GM12878 (cell line): ENCODE measurements at regions of chr14 and their contacts with region 1.

Region 1: DNA sequence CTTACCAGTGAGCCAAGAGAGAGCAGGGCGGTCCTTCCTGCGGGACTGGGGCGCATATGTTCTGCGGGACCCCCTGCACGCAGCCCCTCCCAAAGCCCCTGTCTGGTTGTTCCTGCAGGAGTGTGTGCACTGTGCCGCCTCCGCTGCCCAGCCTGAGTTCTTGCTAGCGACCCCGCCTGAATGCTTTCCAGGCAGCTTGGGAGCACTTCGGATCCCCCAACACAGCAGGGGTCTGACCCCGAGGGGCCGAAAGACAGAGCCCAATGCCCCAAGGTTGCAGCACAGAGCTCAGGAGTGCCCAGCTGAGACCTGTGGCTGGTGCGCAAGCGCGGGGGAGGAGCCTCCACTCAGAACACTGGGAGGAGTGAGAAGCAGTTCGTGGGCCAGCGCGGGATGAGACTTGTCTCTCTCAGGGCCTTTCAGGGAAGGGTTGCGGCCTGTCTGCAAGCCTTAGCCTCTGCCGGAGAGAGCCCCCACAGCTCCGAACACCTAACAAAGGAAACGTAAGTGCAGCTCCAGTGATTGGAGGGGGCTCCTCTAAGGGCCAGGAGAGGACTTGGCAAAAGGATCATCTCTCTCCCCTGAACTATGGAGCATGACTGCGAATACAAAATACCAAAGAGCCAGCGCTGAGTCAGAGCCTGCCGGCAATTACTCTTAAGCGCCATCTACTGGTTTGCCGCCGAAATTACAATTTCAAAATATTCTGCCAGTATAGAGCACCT is 50.5 kb downstream of the GTF2A1 start:
- DNase-seq: peak; percentile 61
- ATAC-seq: peak; percentile 99
- H3K4me3 ChIP-seq: peak overlapping the region; percentile 80
- H3K27ac ChIP-seq: peak overlapping the region; percentile 84
- H3K4me1 ChIP-seq: peaks cover 32% of the 10 kb centered on the region
- H3K27me3 ChIP-seq: no peaks in the 10 kb centered on the region
- CTCF ChIP-seq: peak; percentile 82 to 86 (median 83)
- EP300 ChIP-seq: no peak
- POLR2A ChIP-seq: peak; percentile 87
- RAD21 ChIP-seq: peak; percentile 75

Region 2: GRCh38 chr14:80954687-80955299 is 215.5 kb before region 1 on chr14:
- CTCF ChIA-PET with region 1: interaction called, 10 read pairs
- POLR2A ChIA-PET with region 1: no interaction called
- RAD21 ChIA-PET with region 1: interaction called, 5 read pairs
- SMC1A ChIA-PET with region 1: interaction called, 4 read pairs
- in situ Hi-C with region 1: no loop called
- intact Hi-C with region 1: loop called (anchors 1 kb)
- DNase-seq: no peak
- ATAC-seq: peak; percentile 46
- H3K4me3 ChIP-seq: no peak overlapping the region; the same call in 1 of the 2 replicates
- H3K27ac ChIP-seq: no peak overlapping the region
- H3K4me1 ChIP-seq: peaks cover 12% of the 10 kb centered on the region
- H3K27me3 ChIP-seq: peaks cover 0 to 5% of the 10 kb centered on the region in 2 experiments; a peak in 3 of 4 replicates
- CTCF ChIP-seq: peak; percentile 70 to 83 (median 71)
- EP300 ChIP-seq: no peak
- POLR2A ChIP-seq: no peak
- RAD21 ChIP-seq: peak; percentile 84

Region 3: GRCh38 chr14:80996049-80996901 is 174.0 kb before region 1 on chr14:
- CTCF ChIA-PET with region 1: interaction called, 96 read pairs
- POLR2A ChIA-PET with region 1: no interaction called
- RAD21 ChIA-PET with region 1: interaction called, 25 read pairs
- SMC1A ChIA-PET with region 1: interaction called, 27 read pairs
- in situ Hi-C with region 1: loop called (anchors 5 kb)
- intact Hi-C with region 1: loop called (anchors 1 kb)
- DNase-seq: no peak
- ATAC-seq: peak; percentile 92
- H3K4me3 ChIP-seq: no peak overlapping the region
- H3K27ac ChIP-seq: no peak overlapping the region
- H3K4me1 ChIP-seq: no peaks in the 10 kb centered on the region
- H3K27me3 ChIP-seq: no peaks in the 10 kb centered on the region
- CTCF ChIP-seq: peak; percentile 53 to 59 (median 56)
- EP300 ChIP-seq: no peak
- POLR2A ChIP-seq: no peak
- RAD21 ChIP-seq: peak; percentile 73

Region 4: DNA sequence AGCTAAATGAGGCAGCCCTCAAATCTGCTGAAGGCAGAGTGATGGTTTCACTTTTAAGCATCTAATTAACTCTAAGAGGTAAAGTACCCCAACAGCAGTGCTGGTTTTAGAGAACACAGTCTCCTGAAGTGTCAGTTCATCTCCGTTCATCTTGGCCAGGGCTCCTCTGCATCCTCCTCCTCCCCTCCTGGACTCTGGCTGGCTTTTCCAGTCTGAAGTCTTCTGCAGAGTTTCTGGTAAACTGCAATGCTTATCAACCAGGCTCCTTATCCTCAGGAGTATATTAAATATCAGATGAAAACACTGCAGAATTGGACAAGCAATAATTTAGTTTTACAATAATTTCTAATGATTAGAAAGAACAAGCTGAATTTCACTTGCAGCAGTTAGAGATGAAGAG is 64.9 kb before region 1 on chr14:
- CTCF ChIA-PET with region 1: no interaction called
- POLR2A ChIA-PET with region 1: no interaction called
- RAD21 ChIA-PET with region 1: no interaction called
- SMC1A ChIA-PET with region 1: no interaction called
- in situ Hi-C with region 1: no loop called
- intact Hi-C with region 1: no loop called
- DNase-seq: no peak
- ATAC-seq: no peak
- H3K4me3 ChIP-seq: no peak overlapping the region
- H3K27ac ChIP-seq: no peak overlapping the region
- H3K4me1 ChIP-seq: no peaks in the 10 kb centered on the region
- H3K27me3 ChIP-seq: no peaks in the 10 kb centered on the region
- CTCF ChIP-seq: no peak
- EP300 ChIP-seq: no peak
- POLR2A ChIP-seq: no peak
- RAD21 ChIP-seq: no peak

Region 5: GRCh38 chr14:81187832-81188522 is 17.7 kb after region 1 on chr14:
- CTCF ChIA-PET with region 1: interaction called, 38 read pairs
- POLR2A ChIA-PET with region 1: interaction called, 3 read pairs
- RAD21 ChIA-PET with region 1: interaction called, 5 read pairs
- SMC1A ChIA-PET with region 1: interaction called, 10 read pairs
- in situ Hi-C with region 1: no loop called
- intact Hi-C with region 1: no loop called
- DNase-seq: no peak
- ATAC-seq: peak; percentile 82
- H3K4me3 ChIP-seq: no peak overlapping the region
- H3K27ac ChIP-seq: no peak overlapping the region
- H3K4me1 ChIP-seq: peaks cover 4% of the 10 kb centered on the region; the same call in 1 of the 2 replicates
- H3K27me3 ChIP-seq: no peaks in the 10 kb centered on the region
- CTCF ChIP-seq: no peak
- EP300 ChIP-seq: no peak
- POLR2A ChIP-seq: no peak
- RAD21 ChIP-seq: no peak

Region 6: DNA sequence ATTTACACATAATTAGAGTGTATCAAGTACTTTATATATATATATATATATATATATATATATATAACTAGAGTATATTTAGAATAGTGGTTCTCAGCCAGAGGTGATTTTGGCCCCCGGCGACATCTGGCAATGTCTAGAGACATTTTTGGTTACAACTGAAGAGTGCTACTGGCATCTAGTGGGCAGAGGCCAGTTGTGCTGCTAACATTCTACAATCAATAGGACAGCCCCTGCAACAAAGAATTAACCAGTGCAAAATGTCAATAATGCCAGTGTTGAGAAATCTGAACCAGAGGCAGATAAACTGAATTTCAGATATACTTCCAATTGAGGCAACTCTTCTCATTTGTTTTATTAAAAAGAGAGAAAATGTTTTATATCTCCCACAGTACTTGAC is 41.6 kb after region 1 on chr14:
- CTCF ChIA-PET with region 1: interaction called, 15 read pairs
- POLR2A ChIA-PET with region 1: no interaction called
- RAD21 ChIA-PET with region 1: interaction called, 4 read pairs
- SMC1A ChIA-PET with region 1: interaction called, 10 read pairs
- in situ Hi-C with region 1: no loop called
- intact Hi-C with region 1: no loop called
- DNase-seq: no peak
- ATAC-seq: peak; percentile 79
- H3K4me3 ChIP-seq: no peak overlapping the region
- H3K27ac ChIP-seq: no peak overlapping the region
- H3K4me1 ChIP-seq: peaks cover 8% of the 10 kb centered on the region
- H3K27me3 ChIP-seq: no peaks in the 10 kb centered on the region
- CTCF ChIP-seq: peak; percentile 36 to 54 (median 41); a peak in 5 of 6 replicates
- EP300 ChIP-seq: no peak
- POLR2A ChIP-seq: no peak
- RAD21 ChIP-seq: peak; percentile 68

Region 7: GRCh38 chr14:81220830-81221578 is 50.7 kb after region 1 on chr14 and contains the start of gene GTF2A1:
- CTCF ChIA-PET with region 1: interaction called, 19 read pairs
- POLR2A ChIA-PET with region 1: interaction called, 8 read pairs
- RAD21 ChIA-PET with region 1: interaction called, 8 read pairs
- SMC1A ChIA-PET with region 1: interaction called, 4 read pairs
- in situ Hi-C with region 1: no loop called
- intact Hi-C with region 1: loop called (anchors 2 kb)
- DNase-seq: peak; percentile 82
- ATAC-seq: peak; percentile 84
- H3K4me3 ChIP-seq: peak within 1 kb of the TSS; percentile 85
- H3K27ac ChIP-seq: peak within 1 kb of the TSS; percentile 98
- H3K4me1 ChIP-seq: 0 out of 2 replicates have a peak, but pooled peaks cover 3% of the 10 kb centered on the region
- H3K27me3 ChIP-seq: no peaks in the 10 kb centered on the region
- CTCF ChIP-seq: no peak
- EP300 ChIP-seq: peak; percentile 2 to 49; a peak in 1 of 4 replicates
- POLR2A ChIP-seq: peak; percentile 95
- RAD21 ChIP-seq: no peak
- polyA plus RNA-seq, gene GTF2A1: 3.5 to 5.1 TPM

Region 8: DNA sequence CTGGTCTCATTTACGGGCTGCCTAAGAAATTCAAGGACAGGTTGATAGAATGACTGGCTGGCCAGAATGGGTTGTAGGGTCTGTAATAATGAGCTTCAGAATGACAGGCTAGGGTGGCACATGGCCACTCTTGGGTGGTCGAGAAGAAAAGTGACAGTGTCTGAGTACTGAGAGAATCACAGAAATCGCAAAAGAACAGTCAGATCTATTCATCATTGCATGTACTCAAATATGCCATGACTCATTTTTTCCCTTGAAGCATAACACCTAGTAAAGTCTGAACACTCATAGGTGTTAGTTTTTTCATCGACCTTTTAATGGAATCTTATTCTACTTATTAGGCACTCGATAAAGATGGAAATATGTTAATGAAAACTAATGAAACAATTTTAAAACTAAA is 401.2 kb after region 1 on chr14:
- CTCF ChIA-PET with region 1: no interaction called
- POLR2A ChIA-PET with region 1: no interaction called
- RAD21 ChIA-PET with region 1: no interaction called
- SMC1A ChIA-PET with region 1: no interaction called
- in situ Hi-C with region 1: no loop called
- intact Hi-C with region 1: no loop called
- DNase-seq: no peak
- ATAC-seq: peak; percentile 56
- H3K4me3 ChIP-seq: no peak overlapping the region
- H3K27ac ChIP-seq: no peak overlapping the region
- H3K4me1 ChIP-seq: no peaks in the 10 kb centered on the region
- H3K27me3 ChIP-seq: peaks cover 0 to 2% of the 10 kb centered on the region in 2 experiments; a peak in 1 of 4 replicates
- CTCF ChIP-seq: no peak
- EP300 ChIP-seq: no peak
- POLR2A ChIP-seq: no peak
- RAD21 ChIP-seq: no peak